Activated CD4-positive, alpha-beta T cell treated with anti-CD3 and anti-CD28 coated beads for 36 hours (primary cell): ENCODE measurements at regions of chr11 and their contacts with region 1.

Region 1: DNA sequence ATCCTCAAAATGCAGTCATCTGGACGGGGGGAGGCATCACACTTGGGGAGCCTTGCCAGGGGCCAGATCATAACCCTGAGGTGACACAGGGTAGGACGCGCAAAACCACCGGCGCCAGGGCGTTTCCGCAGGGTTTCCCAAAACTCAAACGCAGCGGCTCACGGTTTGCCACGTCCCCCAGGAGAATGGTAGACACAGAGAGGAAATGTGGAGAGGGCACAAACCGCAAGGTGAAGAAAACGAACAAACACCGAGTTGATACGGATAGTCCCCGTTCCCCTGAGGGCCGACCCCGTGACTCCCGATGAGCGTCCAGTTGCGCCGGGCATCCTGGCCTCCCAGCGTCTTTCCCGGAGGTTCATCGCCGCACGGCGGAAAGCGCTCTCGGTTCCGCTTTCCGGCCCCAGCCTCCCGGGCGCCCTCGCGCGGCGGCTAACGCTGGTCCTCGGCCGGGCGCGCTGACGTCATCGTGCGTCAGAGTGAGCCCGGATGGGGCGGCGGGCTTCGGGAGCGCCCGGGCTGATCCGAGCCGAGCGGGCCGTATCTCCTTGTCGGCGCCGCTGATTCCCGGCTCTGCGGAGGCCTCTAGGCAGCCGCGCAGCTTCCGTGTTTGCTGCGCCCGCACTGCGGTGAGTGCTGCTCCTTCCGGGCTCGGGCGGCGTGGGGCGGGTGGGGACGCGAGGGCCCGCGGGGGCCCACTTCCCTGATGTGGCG is at the start of gene BIRC2:
- DNase-seq: peak; percentile 98
- ATAC-seq: peak; percentile 89
- H3K4me3 Mint-ChIP-seq: peak within 1 kb of the TSS; percentile 94
- H3K27ac Mint-ChIP-seq: peak within 1 kb of the TSS; percentile 99
- H3K4me1 Mint-ChIP-seq: peaks cover 40% of the 10 kb centered on the region
- H3K27me3 Mint-ChIP-seq: no peaks in the 10 kb centered on the region
- total RNA-seq, gene BIRC2: 33.0 to 48.8 TPM

Region 2: GRCh38 chr11:101870510-101870909 is 476.4 kb before region 1 on chr11:
- CTCF ChIA-PET with region 1: no interaction called
- POLR2A ChIA-PET with region 1: no interaction called
- intact Hi-C with region 1: no loop called
- DNase-seq: no peak
- ATAC-seq: no peak
- H3K4me3 Mint-ChIP-seq: no peak overlapping the region
- H3K27ac Mint-ChIP-seq: no peak overlapping the region
- H3K4me1 Mint-ChIP-seq: no peaks in the 10 kb centered on the region
- H3K27me3 Mint-ChIP-seq: peaks cover 6% of the 10 kb centered on the region

Region 3: DNA sequence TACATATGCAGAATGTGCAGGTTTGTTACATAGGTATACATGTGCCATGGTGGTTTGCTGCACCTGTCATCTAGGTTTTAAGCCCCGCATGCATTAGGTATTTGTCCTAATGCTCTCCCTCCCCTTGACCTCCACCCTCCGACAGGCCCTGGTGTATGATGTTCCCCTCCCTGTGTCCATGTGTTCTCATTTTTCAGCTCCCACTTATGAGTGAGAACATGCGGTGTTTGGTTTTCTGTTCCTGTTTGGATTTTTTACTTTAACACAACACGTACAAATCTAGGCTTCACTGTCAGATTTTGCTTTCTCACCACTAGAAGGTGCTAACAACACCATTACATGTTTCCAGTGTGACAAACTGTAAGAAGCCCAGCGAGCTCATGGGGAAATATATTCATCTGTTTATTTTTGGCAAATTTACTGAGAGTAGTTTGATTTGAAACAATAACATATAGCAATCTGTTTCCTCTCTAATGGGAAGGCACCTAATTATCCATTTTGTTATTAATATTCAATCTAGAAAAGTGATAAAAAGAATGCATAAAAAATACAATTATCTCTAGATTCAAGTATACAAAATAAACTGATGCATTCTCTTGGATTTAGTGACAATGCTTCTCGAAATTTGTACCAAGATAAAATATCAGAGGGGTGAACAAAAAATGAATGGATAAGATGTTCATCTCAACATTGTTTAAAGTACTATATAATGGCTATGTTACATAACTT is 52.9 kb before region 1 on chr11:
- CTCF ChIA-PET with region 1: interaction called, 67 read pairs
- POLR2A ChIA-PET with region 1: no interaction called
- intact Hi-C with region 1: no loop called
- DNase-seq: no peak
- ATAC-seq: peak; percentile 95
- H3K4me3 Mint-ChIP-seq: peak overlapping the region; percentile 68
- H3K27ac Mint-ChIP-seq: peak overlapping the region; percentile 95
- H3K4me1 Mint-ChIP-seq: peaks cover 27% of the 10 kb centered on the region
- H3K27me3 Mint-ChIP-seq: no peaks in the 10 kb centered on the region

Region 4: DNA sequence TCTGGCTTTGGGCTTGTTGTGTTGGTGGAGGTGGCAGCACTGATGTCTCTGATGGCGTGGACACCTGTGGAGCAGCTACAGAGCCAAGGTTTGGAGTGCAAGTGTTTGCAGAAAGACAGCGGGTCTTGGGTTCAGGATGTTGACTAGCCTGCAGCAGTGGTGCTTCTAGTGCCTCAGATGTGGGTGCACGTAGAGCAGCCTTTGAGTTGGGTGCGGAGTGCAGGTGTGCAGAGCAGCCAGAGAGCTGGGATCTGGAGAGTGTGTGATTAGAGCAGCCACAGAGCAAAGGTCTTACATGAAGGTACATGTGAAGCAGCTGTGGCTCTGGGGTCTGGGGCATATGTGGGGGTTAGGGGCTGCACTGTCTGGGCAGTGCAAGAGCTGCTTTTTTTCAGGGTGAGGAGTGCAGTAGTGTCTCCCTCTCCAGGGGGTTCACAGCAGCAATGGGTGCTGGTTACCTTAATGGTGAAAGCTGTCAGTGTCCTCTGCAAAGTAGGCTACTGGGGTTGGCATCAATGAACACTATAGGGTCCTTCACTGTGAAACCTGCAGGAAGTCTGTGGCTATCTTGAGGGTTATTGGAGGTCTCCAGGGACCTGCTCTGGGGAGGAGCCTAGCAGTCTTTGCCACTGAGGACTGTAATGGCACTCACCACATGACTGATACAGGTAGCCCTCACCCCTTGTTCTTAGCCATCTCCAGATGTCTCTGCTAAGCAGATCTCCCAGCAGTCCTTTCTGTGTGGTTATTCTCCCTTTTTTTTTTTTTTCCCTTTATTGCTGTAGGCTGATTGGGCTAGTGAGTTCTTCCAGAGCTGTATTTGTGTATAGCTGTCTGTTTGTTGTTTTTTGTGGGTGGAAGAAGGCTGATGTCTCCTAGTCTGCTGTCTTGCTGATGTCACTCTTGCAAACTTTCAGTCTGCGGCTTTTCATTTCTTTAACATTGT is 14.5 kb after region 1 on chr11:
- CTCF ChIA-PET with region 1: interaction called, 34 read pairs
- POLR2A ChIA-PET with region 1: interaction called, 3 read pairs
- intact Hi-C with region 1: loop called in 1 of 2 experiments (anchors 2 kb)
- DNase-seq: peak; percentile 33
- ATAC-seq: peak; percentile 86
- H3K4me3 Mint-ChIP-seq: no peak overlapping the region
- H3K27ac Mint-ChIP-seq: peak overlapping the region; percentile 75
- H3K4me1 Mint-ChIP-seq: peaks cover 42% of the 10 kb centered on the region
- H3K27me3 Mint-ChIP-seq: no peaks in the 10 kb centered on the region

Region 5: DNA sequence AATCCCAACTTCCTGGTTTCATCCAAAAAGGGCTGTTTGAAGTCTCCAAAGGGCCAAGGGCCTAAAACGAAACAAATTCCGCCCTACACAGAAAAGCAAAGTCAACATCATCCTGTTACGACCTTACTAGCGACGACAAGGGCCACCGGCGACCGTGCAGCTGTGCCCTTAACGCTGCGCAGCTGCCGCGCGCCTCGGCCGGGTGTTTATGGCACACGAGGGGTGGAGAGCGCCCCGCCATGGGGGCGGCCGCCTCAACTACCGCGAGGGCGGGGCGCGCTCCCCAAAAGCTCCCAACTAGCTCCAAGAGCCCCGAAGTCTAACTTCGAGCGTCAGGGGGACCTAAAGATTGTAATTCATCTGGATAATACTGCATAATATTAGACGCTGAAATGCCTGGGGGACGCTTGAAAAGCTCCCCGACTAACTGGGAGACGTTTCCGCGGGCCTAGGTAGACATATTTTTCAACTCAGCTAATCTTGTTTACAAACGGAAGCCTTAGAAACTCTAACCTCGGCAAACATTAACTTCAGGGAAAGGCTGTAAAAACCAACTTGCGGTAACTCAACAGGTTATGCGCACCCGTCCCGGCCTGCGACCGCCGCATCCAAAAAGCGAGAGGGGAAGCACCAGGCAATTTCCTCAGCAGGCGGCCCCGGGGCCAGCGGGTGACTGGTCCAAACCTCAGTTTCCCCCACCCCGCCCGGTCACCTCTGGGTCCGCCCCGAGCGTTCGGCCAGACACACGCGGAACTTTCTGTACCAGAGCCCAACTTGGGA is 105.0 kb after region 1 on chr11:
- CTCF ChIA-PET with region 1: no interaction called
- POLR2A ChIA-PET with region 1: interaction called, 3 read pairs
- intact Hi-C with region 1: loop called (anchors 1 to 2 kb)
- DNase-seq: peak; percentile 90
- ATAC-seq: peak; percentile 66
- H3K4me3 Mint-ChIP-seq: peak overlapping the region; percentile 86
- H3K27ac Mint-ChIP-seq: peak overlapping the region; percentile 91
- H3K4me1 Mint-ChIP-seq: peaks cover 82% of the 10 kb centered on the region
- H3K27me3 Mint-ChIP-seq: no peaks in the 10 kb centered on the region

Region 6: DNA sequence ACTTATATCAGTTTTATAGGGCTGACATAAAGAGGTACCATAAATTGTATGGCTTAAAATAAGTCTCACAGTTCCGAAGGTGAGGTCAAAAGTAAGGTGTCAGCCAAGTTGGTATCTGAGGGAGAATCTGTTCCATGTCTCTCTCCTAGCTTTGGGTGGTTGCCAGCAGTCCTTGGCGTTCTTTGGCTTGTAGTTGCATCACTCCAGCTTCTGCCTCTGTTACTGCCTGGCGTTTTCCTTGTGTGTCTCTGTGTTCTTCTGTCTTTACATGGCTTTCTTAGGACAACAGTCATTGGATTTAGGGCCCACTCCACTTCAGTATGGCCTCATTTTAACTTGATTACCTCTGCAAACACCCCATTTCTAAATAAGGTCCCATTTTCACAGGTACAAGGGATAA is 167.0 kb after region 1 on chr11:
- CTCF ChIA-PET with region 1: interaction called, 15 read pairs
- POLR2A ChIA-PET with region 1: no interaction called
- intact Hi-C with region 1: no loop called
- DNase-seq: no peak
- ATAC-seq: no peak
- H3K4me3 Mint-ChIP-seq: no peak overlapping the region
- H3K27ac Mint-ChIP-seq: no peak overlapping the region
- H3K4me1 Mint-ChIP-seq: no peaks in the 10 kb centered on the region
- H3K27me3 Mint-ChIP-seq: peaks cover 2% of the 10 kb centered on the region